ENCODE measurements at regions of chr1 and their contacts with region 1.

Region 1: DNA sequence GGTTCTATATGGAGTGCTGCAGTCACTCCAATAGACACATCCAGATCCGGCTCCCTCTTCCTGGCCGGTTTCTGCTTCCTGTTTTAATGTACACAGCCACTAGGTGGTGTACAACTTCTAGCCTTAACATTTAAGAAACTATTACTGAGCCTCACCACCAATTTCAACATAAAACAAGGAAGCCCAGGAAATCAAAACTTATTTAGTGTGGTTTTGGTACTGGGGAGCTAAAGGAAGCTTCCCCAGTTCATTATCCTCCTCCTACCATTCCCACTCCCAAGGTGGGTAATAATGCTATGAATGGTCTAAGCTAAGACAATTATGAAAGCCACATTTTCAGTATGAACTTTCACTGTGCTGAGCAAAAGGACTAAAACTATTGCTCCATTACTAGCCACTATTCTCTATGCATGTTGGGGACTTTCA is 25.5 kb upstream of the MTMR11 start:
- DNase-seq: peak; percentile 57
- H3K4me3 ChIP-seq: no peak overlapping the region
- H3K27ac ChIP-seq: peak overlapping the region; percentile 29 to 60 (median 46)
- H3K4me1 ChIP-seq: peaks cover 0 to 15% (median 0%) of the 10 kb centered on the region in 4 donors
- H3K27me3 ChIP-seq: no peaks in the 10 kb centered on the region
- CTCF ChIP-seq: peak; percentile 75 to 90 (median 80)
- EP300 ChIP-seq: no peak
- POLR2A ChIP-seq: no peak

Region 2: DNA sequence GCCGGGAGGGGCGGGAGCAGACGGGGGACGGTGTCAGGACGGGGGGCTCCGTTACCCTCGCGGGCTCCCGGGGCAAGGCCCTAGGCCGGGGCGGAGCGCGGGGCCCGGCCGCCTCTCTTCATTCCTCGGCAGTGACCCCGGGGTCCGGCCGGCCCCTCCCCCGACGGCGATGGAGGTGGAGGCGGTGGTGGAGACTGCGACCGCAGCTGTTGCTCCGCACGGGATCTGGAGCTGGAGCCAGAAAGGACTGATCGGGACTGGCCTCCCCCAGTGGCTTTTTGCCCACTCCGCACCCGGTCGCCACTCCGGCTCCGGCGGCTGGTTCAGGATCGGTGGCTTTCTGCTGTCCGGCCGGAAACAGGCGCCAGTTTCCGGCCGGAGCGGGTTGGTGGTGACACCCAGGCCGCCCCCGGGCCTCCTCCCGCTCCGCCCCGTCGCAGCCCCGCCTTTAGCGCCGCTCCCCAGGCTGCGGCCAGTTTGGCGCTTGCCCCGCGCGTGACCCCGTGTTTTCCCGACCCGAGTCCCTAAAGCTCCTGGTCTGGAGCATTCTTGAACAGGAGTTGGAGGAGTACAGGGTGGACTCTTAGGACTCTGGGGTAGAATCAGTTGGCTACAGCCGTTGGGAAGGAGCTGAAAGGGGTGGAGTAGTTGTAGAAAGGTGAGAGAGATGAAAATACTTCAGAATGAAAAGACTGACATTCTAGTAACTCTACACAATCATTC is 48.4 kb after region 1 on chr1 and contains the start of gene OTUD7B:
- in situ Hi-C with region 1: no loop called
- intact Hi-C with region 1: loop called (anchors 2 kb)
- DNase-seq: peak; percentile 91
- H3K4me3 ChIP-seq: peak within 1 kb of the TSS; percentile 82 to 95 (median 86)
- H3K27ac ChIP-seq: peak within 1 kb of the TSS; percentile 95 to 98 (median 96)
- H3K4me1 ChIP-seq: peaks cover 4 to 52% (median 24%) of the 10 kb centered on the region in 4 donors
- H3K27me3 ChIP-seq: no peaks in the 10 kb centered on the region
- CTCF ChIP-seq: no peak
- EP300 ChIP-seq: no peak
- POLR2A ChIP-seq: peak; percentile 86
- total RNA-seq, gene OTUD7B: 11.3 to 26.8 (median 25.5) TPM

Region 3: DNA sequence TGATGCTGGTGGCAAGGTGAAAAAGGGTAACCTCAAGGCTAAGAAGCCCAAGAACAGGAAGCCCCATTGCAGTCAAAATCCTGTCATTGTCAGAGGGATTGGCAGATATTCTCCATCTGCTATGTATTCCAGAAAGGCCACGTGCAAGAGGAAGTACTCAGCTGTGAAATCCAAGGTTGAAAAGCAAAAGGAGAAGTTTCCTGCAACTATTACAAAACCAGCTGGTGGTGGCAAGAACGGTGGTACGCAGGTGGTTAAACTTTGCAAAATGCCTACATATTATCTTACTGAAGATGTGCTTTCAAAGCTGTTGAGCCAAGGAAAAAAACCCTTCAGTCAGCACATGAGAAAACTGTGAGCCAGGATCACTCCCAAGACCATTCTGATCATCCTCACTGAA is 91.8 kb after region 1 on chr1:
- in situ Hi-C with region 1: loop called (anchors 5 to 10 kb)
- intact Hi-C with region 1: no loop called
- DNase-seq: no peak
- H3K4me3 ChIP-seq: no peak overlapping the region
- H3K27ac ChIP-seq: no peak overlapping the region
- H3K4me1 ChIP-seq: peaks cover 0 to 6% (median 0%) of the 10 kb centered on the region in 4 donors
- H3K27me3 ChIP-seq: no peaks in the 10 kb centered on the region
- CTCF ChIP-seq: no peak
- EP300 ChIP-seq: no peak
- POLR2A ChIP-seq: no peak

Region 4: DNA sequence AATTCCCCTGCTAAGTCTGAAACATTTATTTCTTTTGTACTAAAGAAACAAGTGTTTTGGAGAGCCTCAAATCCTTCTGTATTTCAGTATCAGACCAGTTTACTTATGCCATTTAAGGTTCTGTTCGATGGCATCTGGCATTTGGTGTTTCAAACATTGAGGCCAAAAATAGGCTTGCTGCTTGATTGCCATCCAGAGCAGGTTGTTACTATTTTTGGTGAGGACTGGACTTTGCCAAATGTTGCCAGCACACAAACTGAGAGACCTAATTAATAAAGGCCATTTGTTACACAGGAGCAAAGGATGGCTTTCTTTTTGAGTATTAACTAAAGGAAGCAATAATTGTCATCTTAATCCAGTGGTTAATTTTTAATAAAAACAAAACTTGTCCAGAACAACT is 131.7 kb after region 1 on chr1:
- in situ Hi-C with region 1: no loop called
- intact Hi-C with region 1: no loop called
- DNase-seq: no peak
- H3K4me3 ChIP-seq: no peak overlapping the region
- H3K27ac ChIP-seq: peak overlapping the region in 1 of 4 donors; percentile 28
- H3K4me1 ChIP-seq: peaks cover 0 to 6% (median 0%) of the 10 kb centered on the region in 4 donors
- H3K27me3 ChIP-seq: no peaks in the 10 kb centered on the region
- CTCF ChIP-seq: no peak
- EP300 ChIP-seq: no peak
- POLR2A ChIP-seq: no peak

Region 5: GRCh38 chr1:150168960-150169601 is 206.9 kb after region 1 on chr1:
- in situ Hi-C with region 1: no loop called
- intact Hi-C with region 1: loop called (anchors 5 kb)
- DNase-seq: peak; percentile 74
- H3K4me3 ChIP-seq: no peak overlapping the region
- H3K27ac ChIP-seq: no peak overlapping the region
- H3K4me1 ChIP-seq: peaks cover under 1 to 19% (median 8%) of the 10 kb centered on the region in 4 donors
- H3K27me3 ChIP-seq: no peaks in the 10 kb centered on the region
- CTCF ChIP-seq: peak; percentile 65 to 83 (median 72)
- EP300 ChIP-seq: no peak
- POLR2A ChIP-seq: no peak

Region 6: DNA sequence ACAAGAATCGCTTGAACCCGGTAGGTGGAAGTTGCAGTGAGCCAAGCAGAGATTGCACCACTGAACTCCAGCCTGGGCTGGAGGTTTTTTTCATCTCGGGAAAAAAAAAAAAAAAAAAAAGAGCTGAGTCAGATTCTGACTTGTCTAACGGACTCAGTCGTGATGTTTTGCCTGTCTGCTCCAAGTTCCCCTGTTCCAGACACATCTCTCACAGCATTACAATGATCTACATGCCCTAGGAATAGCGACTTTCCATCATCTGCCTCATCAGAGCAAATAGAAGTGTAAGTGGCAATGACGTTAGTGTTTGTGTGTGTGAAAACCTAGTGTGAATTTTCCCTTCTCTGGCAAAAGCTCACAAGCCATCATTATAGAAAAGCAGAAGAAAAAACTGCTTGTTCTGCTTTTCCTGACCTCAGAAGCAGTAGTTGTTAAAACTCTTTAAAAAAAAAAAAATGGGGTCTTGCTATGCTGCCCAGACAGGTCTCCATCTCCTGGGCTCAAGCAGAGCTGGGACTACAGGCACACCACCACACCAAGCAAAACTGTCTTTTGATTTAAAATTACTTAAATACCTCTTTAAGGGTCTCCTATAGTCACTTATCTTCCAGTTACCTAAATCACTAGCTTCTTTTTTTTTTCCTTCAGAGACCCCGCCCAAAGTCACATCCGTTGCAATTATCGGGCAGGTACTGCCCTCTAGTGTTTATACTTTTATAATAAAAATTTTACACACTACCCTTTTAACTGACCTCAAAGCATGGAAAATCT is 224.8 kb after region 1 on chr1:
- in situ Hi-C with region 1: loop called (anchors 10 to 25 kb)
- intact Hi-C with region 1: loop called (anchors 5 kb)
- DNase-seq: no peak
- H3K4me3 ChIP-seq: no peak overlapping the region
- H3K27ac ChIP-seq: peak overlapping the region; percentile 19 to 51 (median 27)
- H3K4me1 ChIP-seq: no peaks in the 10 kb centered on the region
- H3K27me3 ChIP-seq: no peaks in the 10 kb centered on the region
- CTCF ChIP-seq: peak; percentile 44 to 56 (median 54)
- EP300 ChIP-seq: no peak
- POLR2A ChIP-seq: no peak